CD4-positive, alpha-beta memory T cell (primary cell): ENCODE measurements at regions of chr16 and their contacts with region 1.

Region 1: DNA sequence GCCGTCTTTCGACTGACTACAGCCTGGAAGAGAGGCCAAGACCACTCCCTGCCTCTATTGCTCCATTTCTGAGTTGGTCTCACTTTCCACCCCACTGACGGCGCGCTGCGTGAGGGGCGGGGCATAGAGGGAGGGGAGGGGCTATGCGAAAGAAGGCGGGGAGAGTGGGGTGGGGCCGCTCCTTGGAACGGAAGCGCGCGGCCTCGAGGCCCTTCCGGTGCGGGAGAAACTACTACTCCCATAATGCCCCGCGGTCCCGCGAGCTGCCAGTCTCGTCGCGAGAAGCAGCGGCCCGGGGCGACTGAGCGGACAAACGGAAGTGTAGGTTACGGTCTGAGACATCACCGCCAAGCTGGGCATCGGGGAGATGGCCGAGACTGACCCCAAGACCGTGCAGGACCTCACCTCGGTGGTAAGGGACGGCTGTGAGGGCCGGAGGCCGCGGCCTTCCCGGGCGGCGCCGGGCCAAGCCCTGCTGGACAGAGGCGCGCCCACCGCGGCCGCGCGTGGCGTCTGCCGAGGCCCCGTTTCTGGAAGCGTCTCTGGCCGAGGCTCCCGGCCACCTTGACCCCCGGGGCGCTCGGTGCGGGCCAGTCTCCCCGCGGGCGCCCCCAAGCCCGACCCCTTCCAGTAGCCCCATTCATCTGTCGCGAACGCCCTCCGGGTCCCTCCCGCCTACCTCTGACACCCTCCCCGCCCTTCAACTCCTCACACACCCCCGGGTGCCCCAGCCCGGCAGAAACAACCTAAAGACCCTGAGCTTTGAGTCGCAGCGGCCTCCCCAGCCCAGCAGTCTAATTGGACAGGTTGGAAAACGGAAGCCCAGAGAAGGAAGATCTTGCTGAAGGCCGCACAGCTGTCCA is at the start of gene HSBP1:
- DNase-seq: peak; percentile 91 to 92 (median 91)
- H3K4me3 ChIP-seq: peak within 1 kb of the TSS; percentile 76 to 89
- H3K4me3 Mint-ChIP-seq: peak within 1 kb of the TSS; percentile 97 to 99 (median 98)
- H3K27ac ChIP-seq: peak within 1 kb of the TSS; percentile 74
- H3K27ac Mint-ChIP-seq: peak within 1 kb of the TSS; percentile 86 to 98 (median 97)
- H3K4me1 ChIP-seq: peaks cover 35% of the 10 kb centered on the region
- H3K4me1 Mint-ChIP-seq: peaks cover 20 to 57% (median 33%) of the 10 kb centered on the region in 4 donors
- H3K27me3 ChIP-seq: no peaks in the 10 kb centered on the region
- H3K27me3 Mint-ChIP-seq: no peaks in the 10 kb centered on the region
- total RNA-seq, gene HSBP1: 30.7 to 34.3 TPM

Region 2: DNA sequence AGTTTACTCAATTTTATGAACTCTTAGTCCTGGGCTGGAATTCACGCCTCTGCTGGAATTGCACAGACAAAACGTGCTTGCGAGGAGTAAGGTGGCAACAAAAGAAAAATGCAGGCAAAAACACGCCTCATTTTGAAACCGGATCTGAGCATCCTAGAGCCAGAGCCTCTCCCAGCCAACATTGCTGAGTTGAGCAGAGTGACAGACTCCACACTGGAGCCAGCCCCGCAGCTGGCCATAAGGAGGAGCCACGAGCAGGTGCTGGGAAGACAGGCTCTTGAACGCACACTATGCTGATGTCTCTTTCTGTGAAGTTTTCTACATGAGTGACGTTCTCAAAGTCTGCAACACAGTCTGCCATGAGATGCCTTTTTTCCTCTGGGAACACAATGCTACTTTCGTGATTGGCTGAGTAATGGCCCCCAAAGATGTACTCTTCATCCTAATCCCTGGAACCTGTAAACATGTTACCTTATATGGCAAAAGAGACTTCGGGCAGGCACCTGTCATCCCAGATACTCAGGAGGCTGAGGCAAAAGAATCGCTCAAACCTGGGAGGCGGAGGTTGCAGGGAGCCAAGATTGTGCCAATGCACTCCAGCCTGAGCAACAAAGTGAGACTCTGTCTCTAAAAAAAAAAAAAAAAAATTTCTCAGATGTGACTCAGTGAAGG is 14.6 kb before region 1 on chr16:
- CTCF ChIA-PET with region 1: no interaction called
- POLR2A ChIA-PET with region 1: no interaction called
- intact Hi-C with region 1: no loop called
- DNase-seq: no peak
- H3K4me3 ChIP-seq: no peak overlapping the region
- H3K4me3 Mint-ChIP-seq: no peak overlapping the region
- H3K27ac ChIP-seq: no peak overlapping the region
- H3K27ac Mint-ChIP-seq: peak overlapping the region in 1 of 7 donors; percentile 33
- H3K4me1 ChIP-seq: no peaks in the 10 kb centered on the region
- H3K4me1 Mint-ChIP-seq: peaks cover 0 to 2% (median 0%) of the 10 kb centered on the region in 4 donors
- H3K27me3 ChIP-seq: no peaks in the 10 kb centered on the region
- H3K27me3 Mint-ChIP-seq: peaks cover 5 to 18% of the 10 kb centered on the region in 2 donors

Region 3: DNA sequence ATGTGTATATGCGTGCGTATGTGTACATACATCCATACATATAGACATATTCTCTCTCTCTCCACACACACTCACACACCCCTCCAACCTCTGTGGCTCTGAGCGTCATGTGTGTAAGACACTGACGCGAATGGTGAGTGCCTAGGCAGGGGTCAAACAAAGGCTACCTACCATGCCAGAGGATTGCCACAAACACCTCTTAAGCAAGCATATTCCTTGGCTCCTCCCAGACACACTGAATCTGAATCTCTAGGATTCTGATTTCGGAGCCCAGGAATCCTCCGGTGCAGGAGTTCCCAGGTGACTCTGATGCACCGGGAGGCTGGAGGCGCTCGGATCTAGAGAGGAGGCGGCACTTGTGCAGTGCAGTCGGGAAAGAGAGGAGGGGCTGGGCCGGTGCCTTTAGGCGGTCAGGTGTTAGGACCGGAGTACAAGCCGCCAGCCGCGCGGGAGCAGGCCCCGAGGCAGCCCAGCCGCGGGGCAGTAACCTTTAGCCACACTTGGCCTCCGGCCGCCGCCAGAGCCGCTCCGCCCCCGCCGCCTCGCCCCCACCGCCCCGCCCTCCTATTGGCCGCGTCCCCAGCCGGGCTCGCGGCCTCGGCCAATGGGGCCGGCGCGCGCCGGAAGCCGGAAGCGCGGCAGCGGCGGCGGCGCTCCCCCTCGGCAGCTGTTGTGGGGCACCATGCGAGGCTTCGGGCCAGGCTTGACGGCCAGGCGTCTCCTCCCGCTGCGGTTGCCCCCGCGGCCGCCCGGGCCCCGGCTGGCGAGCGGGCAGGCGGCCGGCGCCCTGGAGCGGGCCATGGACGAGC is 90.7 kb after region 1 on chr16 and contains the start of gene MLYCD:
- CTCF ChIA-PET with region 1: no interaction called
- POLR2A ChIA-PET with region 1: interaction called, 17 read pairs
- intact Hi-C with region 1: loop called (anchors 1 kb)
- DNase-seq: peak; percentile 67 to 77 (median 70)
- H3K4me3 ChIP-seq: peak within 1 kb of the TSS; percentile 67 to 73
- H3K4me3 Mint-ChIP-seq: peak within 1 kb of the TSS; percentile 90 to 98 (median 92)
- H3K27ac ChIP-seq: peak within 1 kb of the TSS; percentile 53
- H3K27ac Mint-ChIP-seq: peak within 1 kb of the TSS; percentile 51 to 97 (median 90)
- H3K4me1 ChIP-seq: peaks cover 22% of the 10 kb centered on the region
- H3K4me1 Mint-ChIP-seq: peaks cover 23 to 45% (median 31%) of the 10 kb centered on the region in 4 donors
- H3K27me3 ChIP-seq: no peaks in the 10 kb centered on the region
- H3K27me3 Mint-ChIP-seq: peaks cover 2% of the 10 kb centered on the region in 2 donors
- total RNA-seq, gene MLYCD: 9.7 to 11.1 TPM

Region 4: GRCh38 chr16:84044118-84044488 is 236.2 kb after region 1 on chr16:
- CTCF ChIA-PET with region 1: no interaction called
- POLR2A ChIA-PET with region 1: no interaction called
- intact Hi-C with region 1: no loop called
- DNase-seq: no peak
- H3K4me3 ChIP-seq: no peak overlapping the region
- H3K4me3 Mint-ChIP-seq: no peak overlapping the region
- H3K27ac ChIP-seq: no peak overlapping the region
- H3K27ac Mint-ChIP-seq: no peak overlapping the region
- H3K4me1 ChIP-seq: no peaks in the 10 kb centered on the region
- H3K4me1 Mint-ChIP-seq: peaks cover 2 to 14% (median 8%) of the 10 kb centered on the region in 4 donors
- H3K27me3 ChIP-seq: no peaks in the 10 kb centered on the region
- H3K27me3 Mint-ChIP-seq: peaks cover 0 to 6% of the 10 kb centered on the region in 2 donors